ENCODE measurements at regions of chr16 and their contacts with region 1.

Region 1: DNA sequence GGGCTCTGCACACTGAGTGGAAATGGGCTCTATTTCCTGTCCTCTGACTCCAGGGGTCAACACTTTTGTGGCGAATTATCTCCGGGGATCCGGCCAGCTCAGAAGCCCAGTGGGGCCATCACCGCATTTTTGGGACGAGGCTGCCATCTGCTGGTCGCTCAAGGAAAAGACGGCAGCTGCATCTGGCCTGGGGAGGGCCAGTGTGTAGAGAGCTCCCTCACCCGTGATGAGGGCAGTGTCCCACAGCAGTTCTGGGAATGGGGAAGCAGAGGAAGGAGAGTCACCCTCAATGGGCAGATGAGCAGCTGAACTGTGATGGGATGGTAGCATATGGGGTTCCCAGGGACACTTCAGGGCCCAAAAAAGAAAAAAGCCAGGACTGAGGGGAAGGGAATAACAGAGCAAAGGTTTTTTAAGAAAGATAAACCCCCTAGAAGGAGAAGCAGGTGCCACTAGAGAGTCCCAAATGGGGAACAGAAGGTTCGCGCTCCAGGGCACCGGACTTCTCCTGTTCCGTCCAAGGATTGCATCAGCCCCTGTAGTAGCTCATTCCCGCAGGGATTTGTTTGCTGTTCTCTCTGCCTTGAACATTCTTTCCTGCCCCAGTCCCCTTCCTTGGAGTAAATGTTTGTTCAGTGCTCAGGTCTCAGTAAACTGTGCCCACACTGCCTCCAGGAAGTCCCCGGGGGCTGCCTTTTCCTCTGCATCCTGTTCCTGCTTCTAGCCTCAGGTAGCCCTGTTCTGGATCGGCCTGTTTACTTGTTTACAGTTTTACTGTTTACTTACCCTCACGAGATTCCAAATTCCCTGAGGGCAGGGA is 9.3 kb upstream of the ABCC12 start:
- DNase-seq: peak; percentile 82 to 83
- ATAC-seq: peak; percentile 84 to 95
- H3K4me3 ChIP-seq: peak overlapping the region; percentile 17; the same call in 2 of the 3 replicates
- H3K27ac ChIP-seq: peak overlapping the region; percentile 89 to 91
- H3K4me1 ChIP-seq: peaks cover 21% of the 10 kb centered on the region
- CTCF ChIP-seq: peak; percentile 87
- EP300 ChIP-seq: no peak
- POLR2A ChIP-seq: no peak
- RAD21 ChIP-seq: peak; percentile 98 to 99

Region 2: GRCh38 chr16:47037746-47038458 is 1127.2 kb before region 1 on chr16:
- CTCF ChIA-PET with region 1: interaction called, 36 read pairs
- POLR2A ChIA-PET with region 1: interaction called, 18 read pairs
- DNase-seq: peak; percentile 79 to 89
- ATAC-seq: peak; percentile 92 to 98
- H3K4me3 ChIP-seq: peak overlapping the region; percentile 62
- H3K27ac ChIP-seq: peak overlapping the region; percentile 82 to 95
- H3K4me1 ChIP-seq: no peaks in the 10 kb centered on the region
- CTCF ChIP-seq: peak; percentile 86
- EP300 ChIP-seq: no peak
- POLR2A ChIP-seq: no peak
- RAD21 ChIP-seq: peak; percentile 73 to 87

Region 3: GRCh38 chr16:47141773-47142485 is 1023.2 kb before region 1 on chr16:
- CTCF ChIA-PET with region 1: interaction called, 82 read pairs
- POLR2A ChIA-PET with region 1: interaction called, 19 read pairs
- DNase-seq: peak; percentile 82 to 92
- ATAC-seq: peak; percentile 52 to 83; a peak in 5 of 6 replicates
- H3K4me3 ChIP-seq: peak overlapping the region; percentile 69
- H3K27ac ChIP-seq: peak overlapping the region; percentile 95 to 97; a peak in 2 of 6 replicates
- H3K4me1 ChIP-seq: peaks cover 33% of the 10 kb centered on the region
- CTCF ChIP-seq: peak; percentile 90
- EP300 ChIP-seq: no peak
- POLR2A ChIP-seq: no peak
- RAD21 ChIP-seq: peak; percentile 83 to 88

Region 4: GRCh38 chr16:47676635-47677177 is 488.4 kb before region 1 on chr16:
- CTCF ChIA-PET with region 1: no interaction called
- POLR2A ChIA-PET with region 1: no interaction called
- DNase-seq: no peak
- ATAC-seq: no peak
- H3K4me3 ChIP-seq: no peak overlapping the region
- H3K27ac ChIP-seq: no peak overlapping the region
- H3K4me1 ChIP-seq: no peaks in the 10 kb centered on the region
- CTCF ChIP-seq: no peak
- EP300 ChIP-seq: no peak
- POLR2A ChIP-seq: no peak
- RAD21 ChIP-seq: no peak

Region 5: GRCh38 chr16:48136547-48137360 is 28.4 kb before region 1 on chr16:
- CTCF ChIA-PET with region 1: interaction called, 11 read pairs
- POLR2A ChIA-PET with region 1: no interaction called
- DNase-seq: no peak
- ATAC-seq: peak in 1 of 2 experiments; percentile 50; a peak in 3 of 6 replicates
- H3K4me3 ChIP-seq: no peak overlapping the region
- H3K27ac ChIP-seq: peak overlapping the region in 1 of 2 experiments; percentile 22; a peak in 2 of 6 replicates
- H3K4me1 ChIP-seq: peaks cover 22% of the 10 kb centered on the region
- CTCF ChIP-seq: no peak
- EP300 ChIP-seq: no peak
- POLR2A ChIP-seq: no peak
- RAD21 ChIP-seq: no peak

Region 6: DNA sequence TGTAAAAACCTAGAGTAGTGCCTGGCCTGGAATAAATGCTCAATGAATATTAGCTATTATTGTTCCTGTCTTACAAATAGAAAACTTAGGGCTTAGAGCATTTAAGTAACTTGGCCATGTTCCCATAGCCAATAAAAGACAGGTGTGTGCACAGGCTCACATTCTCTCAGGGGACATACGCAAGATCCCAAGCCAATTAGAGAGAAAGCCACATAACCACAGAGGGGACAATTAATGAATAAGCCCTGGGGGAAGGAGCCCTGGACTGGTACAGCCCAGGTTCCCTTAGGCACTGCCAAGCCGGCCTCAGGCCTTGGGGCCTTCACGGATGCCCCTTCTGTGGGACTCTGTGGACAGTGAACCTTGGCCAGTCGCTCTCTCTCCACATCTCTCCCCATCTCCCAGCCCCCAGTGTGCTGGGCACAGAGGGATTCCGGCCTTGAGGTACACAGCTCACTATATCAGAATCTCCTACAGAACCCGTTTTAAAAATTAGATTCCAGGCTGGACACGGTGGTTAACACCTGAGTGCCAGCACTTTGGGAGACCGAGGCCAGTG is 17.9 kb after region 1 on chr16:
- CTCF ChIA-PET with region 1: interaction called, 11 read pairs
- POLR2A ChIA-PET with region 1: no interaction called
- DNase-seq: no peak
- ATAC-seq: no peak
- H3K4me3 ChIP-seq: no peak overlapping the region
- H3K27ac ChIP-seq: no peak overlapping the region
- H3K4me1 ChIP-seq: no peaks in the 10 kb centered on the region
- CTCF ChIP-seq: no peak
- EP300 ChIP-seq: no peak
- POLR2A ChIP-seq: no peak
- RAD21 ChIP-seq: no peak

Region 7: GRCh38 chr16:48317614-48318315 is 152.6 kb after region 1 on chr16:
- CTCF ChIA-PET with region 1: no interaction called
- POLR2A ChIA-PET with region 1: no interaction called
- DNase-seq: peak in 1 of 2 experiments; percentile 33
- ATAC-seq: peak in 1 of 2 experiments; percentile 47; a peak in 1 of 6 replicates
- H3K4me3 ChIP-seq: no peak overlapping the region
- H3K27ac ChIP-seq: no peak overlapping the region
- H3K4me1 ChIP-seq: peaks cover 7% of the 10 kb centered on the region; the same call in 1 of the 3 replicates
- CTCF ChIP-seq: no peak
- EP300 ChIP-seq: no peak
- POLR2A ChIP-seq: no peak
- RAD21 ChIP-seq: no peak

Region 8: GRCh38 chr16:48534601-48535340 is 369.7 kb after region 1 on chr16:
- CTCF ChIA-PET with region 1: no interaction called
- POLR2A ChIA-PET with region 1: no interaction called
- DNase-seq: no peak
- ATAC-seq: peak in 1 of 2 experiments; percentile 18; a peak in 2 of 6 replicates
- H3K4me3 ChIP-seq: no peak overlapping the region
- H3K27ac ChIP-seq: no peak overlapping the region
- H3K4me1 ChIP-seq: no peaks in the 10 kb centered on the region
- CTCF ChIP-seq: no peak
- EP300 ChIP-seq: no peak
- POLR2A ChIP-seq: no peak
- RAD21 ChIP-seq: no peak